Ascending aorta (tissue), 2 donors: ENCODE measurements at regions of chr1 and their contacts with region 1.

Region 1: DNA sequence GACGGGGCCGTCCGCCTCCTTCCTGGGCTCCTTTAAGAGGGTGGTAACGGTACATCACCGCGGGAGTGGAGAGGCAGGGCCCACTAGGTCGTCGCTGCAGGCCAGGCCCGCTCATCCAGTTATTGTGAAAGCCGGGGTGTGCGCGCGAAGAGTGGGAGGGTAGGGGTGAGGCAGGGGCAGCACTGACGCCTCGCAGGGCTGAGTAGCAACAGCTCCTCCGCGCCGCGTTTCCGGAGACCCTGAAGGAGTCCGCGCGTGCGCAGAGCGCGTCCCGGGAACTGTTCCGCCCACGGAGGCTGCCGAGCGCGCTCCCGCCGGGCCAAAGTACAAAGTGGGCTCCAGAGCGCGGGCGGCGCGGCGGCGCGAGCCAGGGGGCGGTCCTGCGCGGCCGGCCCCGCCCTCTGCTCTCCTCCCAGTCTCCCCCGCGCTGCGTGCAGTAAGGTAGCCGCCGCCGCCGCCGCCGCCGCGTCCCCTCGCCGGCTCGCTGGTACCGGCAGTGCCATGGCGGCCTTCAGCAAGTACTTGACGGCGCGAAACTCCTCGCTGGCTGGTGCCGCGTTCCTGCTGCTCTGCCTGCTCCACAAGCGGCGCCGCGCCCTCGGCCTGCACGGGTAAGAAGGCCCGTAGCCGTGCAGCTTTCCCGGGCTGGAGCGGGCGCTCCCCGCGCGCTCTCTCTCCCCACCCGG is at the start of gene ABCD3:
- DNase-seq: peak; percentile 90 to 99
- H3K4me3 ChIP-seq: peak within 1 kb of the TSS; percentile 86 to 94
- H3K27ac ChIP-seq: peak within 1 kb of the TSS; percentile 86 to 90
- H3K4me1 ChIP-seq: peaks cover 0 to 11% of the 10 kb centered on the region in 2 donors
- H3K27me3 ChIP-seq: no peaks in the 10 kb centered on the region
- CTCF ChIP-seq: no peak
- total RNA-seq, gene ABCD3: 8.8 TPM

Region 2: DNA sequence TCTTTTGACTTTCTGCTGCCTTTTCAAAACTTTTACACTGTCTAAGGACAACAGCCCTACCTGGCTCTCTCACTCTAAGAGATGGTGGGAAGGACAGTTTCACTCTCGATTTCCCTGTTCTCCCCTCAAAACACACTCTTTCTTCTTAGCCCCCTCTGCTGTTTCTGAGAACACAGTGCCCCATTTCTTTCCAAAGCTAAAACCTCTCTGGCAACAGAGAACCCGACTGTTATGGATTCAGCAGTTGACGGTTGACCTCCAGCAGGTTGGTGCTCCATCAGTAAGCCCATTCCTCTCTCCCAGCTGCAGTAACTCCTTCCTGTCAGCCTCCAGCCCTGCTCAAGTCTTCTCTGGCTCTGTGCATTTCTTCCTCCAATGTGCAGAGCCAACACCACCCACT is 88.1 kb before region 1 on chr1:
- intact Hi-C with region 1: loop called (anchors 5 kb)
- DNase-seq: no peak
- H3K4me3 ChIP-seq: no peak overlapping the region
- H3K27ac ChIP-seq: no peak overlapping the region
- H3K4me1 ChIP-seq: peaks cover 0 to 14% of the 10 kb centered on the region in 2 donors
- H3K27me3 ChIP-seq: no peaks in the 10 kb centered on the region
- CTCF ChIP-seq: peak; percentile 48 to 57 (median 49)

Region 3: GRCh38 chr1:94792473-94793295 is 374.6 kb after region 1 on chr1:
- intact Hi-C with region 1: loop called (anchors 5 kb)
- DNase-seq: no peak
- H3K4me3 ChIP-seq: peak overlapping the region; percentile 18 to 25
- H3K27ac ChIP-seq: peak overlapping the region; percentile 67 to 84
- H3K4me1 ChIP-seq: peaks cover 6 to 23% of the 10 kb centered on the region in 2 donors
- H3K27me3 ChIP-seq: no peaks in the 10 kb centered on the region
- CTCF ChIP-seq: peak; percentile 28 to 60 (median 41)